ENCODE measurements at regions of chr18 and their contacts with region 1.

Region 1: DNA sequence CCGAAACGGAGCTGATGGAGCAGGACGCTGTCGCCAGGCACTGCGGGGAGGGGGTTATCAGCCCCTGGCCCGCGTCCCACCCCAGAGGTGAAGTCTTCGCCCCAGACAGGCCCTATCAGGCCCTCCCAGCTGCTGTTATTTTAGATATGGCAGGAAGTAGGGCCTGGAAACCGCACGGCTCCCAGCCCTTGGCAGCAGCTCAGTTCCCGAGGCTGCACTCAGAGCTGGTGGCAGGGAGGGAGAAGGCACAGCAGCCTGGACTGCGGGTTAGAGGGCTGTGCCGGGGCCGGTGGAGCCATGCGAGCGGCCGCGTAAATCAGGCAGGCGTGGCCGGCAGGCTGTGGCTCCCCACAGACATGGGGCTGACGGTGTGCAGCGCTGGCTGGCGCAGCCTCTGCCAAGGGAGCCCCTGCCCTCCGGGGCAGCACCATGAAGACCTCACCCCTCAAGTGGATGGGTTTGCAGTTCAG is 111.4 kb downstream of the NFATC1 start:
- DNase-seq: peak in 7 of 9 donors; percentile 22 to 51 (median 47)
- ATAC-seq: peak; percentile 63
- H3K4me3 ChIP-seq: peak overlapping the region; percentile 53
- H3K4me3 Mint-ChIP-seq: peak overlapping the region; percentile 74 to 86 (median 80)
- H3K27ac ChIP-seq: peak overlapping the region; percentile 69
- H3K27ac Mint-ChIP-seq: peak overlapping the region; percentile 83 to 97 (median 95)
- H3K4me1 ChIP-seq: peaks cover 7 to 42% of the 10 kb centered on the region in 2 donors
- H3K4me1 Mint-ChIP-seq: peaks cover 42 to 72% (median 58%) of the 10 kb centered on the region in 7 donors
- H3K27me3 ChIP-seq: no peaks in the 10 kb centered on the region
- H3K27me3 Mint-ChIP-seq: no peaks in the 10 kb centered on the region

Region 2: GRCh38 chr18:79302120-79302519 is 205.0 kb before region 1 on chr18:
- CTCF ChIA-PET with region 1: no interaction called
- POLR2A ChIA-PET with region 1: no interaction called
- intact Hi-C with region 1: no loop called
- DNase-seq: no peak
- ATAC-seq: no peak
- H3K4me3 ChIP-seq: no peak overlapping the region
- H3K4me3 Mint-ChIP-seq: no peak overlapping the region
- H3K27ac ChIP-seq: no peak overlapping the region
- H3K27ac Mint-ChIP-seq: no peak overlapping the region
- H3K4me1 ChIP-seq: no peaks in the 10 kb centered on the region
- H3K4me1 Mint-ChIP-seq: peaks cover 0 to 17% (median 0%) of the 10 kb centered on the region in 7 donors
- H3K27me3 ChIP-seq: no peaks in the 10 kb centered on the region
- H3K27me3 Mint-ChIP-seq: no peaks in the 10 kb centered on the region

Region 3: DNA sequence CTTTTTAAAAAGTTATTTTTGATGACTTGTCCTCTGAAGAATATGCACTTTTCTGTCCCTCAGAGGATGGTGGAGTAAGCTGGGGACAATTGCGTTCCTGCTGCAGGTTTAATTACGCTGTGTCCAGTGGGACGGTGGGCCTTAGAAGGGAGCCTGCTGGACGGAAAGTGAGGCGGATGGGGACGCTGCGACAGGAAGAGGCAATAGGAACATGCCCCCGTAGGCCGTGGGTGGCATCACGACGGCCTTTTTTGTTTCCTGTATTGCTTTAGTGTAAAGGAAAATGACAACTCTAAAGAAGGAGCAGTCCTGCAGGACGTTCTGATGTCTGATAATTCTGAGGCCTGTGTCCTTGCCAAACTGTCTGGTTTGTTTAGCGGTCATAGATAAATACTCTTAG is 10.2 kb after region 1 on chr18:
- CTCF ChIA-PET with region 1: interaction called, 16 read pairs
- POLR2A ChIA-PET with region 1: interaction called, 33 read pairs
- intact Hi-C with region 1: loop called (anchors 1 kb)
- DNase-seq: peak in 6 of 9 donors; percentile 26 to 60 (median 36)
- ATAC-seq: no peak
- H3K4me3 ChIP-seq: no peak overlapping the region
- H3K4me3 Mint-ChIP-seq: peak overlapping the region; percentile 70 to 89 (median 78)
- H3K27ac ChIP-seq: peak overlapping the region; percentile 75
- H3K27ac Mint-ChIP-seq: peak overlapping the region; percentile 86 to 100 (median 98)
- H3K4me1 ChIP-seq: peaks cover 27 to 66% of the 10 kb centered on the region in 2 donors
- H3K4me1 Mint-ChIP-seq: peaks cover 34 to 77% (median 66%) of the 10 kb centered on the region in 7 donors
- H3K27me3 ChIP-seq: no peaks in the 10 kb centered on the region
- H3K27me3 Mint-ChIP-seq: no peaks in the 10 kb centered on the region

Measured in naive thymus-derived CD4-positive, alpha-beta T cell (primary cell).